ENCODE measurements at regions of chr12 and their contacts with region 1.

Region 1: DNA sequence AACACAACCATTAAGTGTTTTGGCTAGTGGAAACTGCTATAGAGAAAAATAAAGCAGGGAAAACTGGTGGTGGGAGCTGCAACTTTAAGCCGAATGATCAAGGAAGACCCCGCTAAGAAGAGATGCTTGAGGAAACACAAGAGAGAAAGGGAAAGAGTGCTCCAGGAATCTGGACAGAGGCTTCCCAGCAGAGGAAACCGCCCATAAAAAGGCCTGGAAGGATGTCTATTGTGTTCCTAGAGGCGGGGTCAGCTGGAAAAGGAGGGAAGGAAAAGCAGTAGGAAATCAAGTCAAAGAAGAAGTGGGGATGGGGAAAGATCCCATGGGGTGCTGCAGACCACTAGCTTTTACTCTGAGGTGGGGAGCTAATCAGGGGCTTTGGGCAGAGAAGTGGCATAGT is 12.4 kb downstream of the SLC2A13 start:
- DNase-seq: no peak
- ATAC-seq: no peak
- H3K4me3 ChIP-seq: no peak overlapping the region
- H3K4me3 Mint-ChIP-seq: no peak overlapping the region
- H3K27ac ChIP-seq: no peak overlapping the region
- H3K27ac Mint-ChIP-seq: no peak overlapping the region
- H3K4me1 ChIP-seq: no peaks in the 10 kb centered on the region
- H3K4me1 Mint-ChIP-seq: no peaks in the 10 kb centered on the region
- H3K27me3 ChIP-seq: no peaks in the 10 kb centered on the region
- H3K27me3 Mint-ChIP-seq: no peaks in the 10 kb centered on the region
- CTCF ChIP-seq: no peak

Region 2: DNA sequence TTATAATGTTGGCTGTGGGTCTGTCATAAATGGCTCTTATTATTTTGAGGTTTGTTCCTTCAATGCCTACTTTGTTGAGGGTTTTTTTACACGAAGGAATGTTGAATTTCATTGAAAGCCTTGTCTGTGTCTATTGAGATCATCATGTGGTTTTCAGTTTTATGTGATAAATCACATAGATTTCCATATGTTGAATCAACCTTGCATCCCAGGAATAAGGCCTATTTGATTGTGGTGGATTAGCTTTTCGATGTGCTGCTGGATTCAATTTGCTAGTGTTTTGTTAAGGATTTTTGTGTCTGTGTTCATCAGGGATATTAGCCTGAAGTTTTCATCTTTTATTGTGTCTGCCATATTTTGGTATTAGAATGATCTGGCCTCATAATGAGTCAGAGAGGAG is 15.2 kb before region 1 on chr12:
- CTCF ChIA-PET with region 1: no interaction called
- POLR2A ChIA-PET with region 1: no interaction called
- intact Hi-C with region 1: no loop called
- DNase-seq: no peak
- ATAC-seq: no peak
- H3K4me3 ChIP-seq: no peak overlapping the region
- H3K4me3 Mint-ChIP-seq: no peak overlapping the region
- H3K27ac ChIP-seq: no peak overlapping the region
- H3K27ac Mint-ChIP-seq: no peak overlapping the region
- H3K4me1 ChIP-seq: no peaks in the 10 kb centered on the region
- H3K4me1 Mint-ChIP-seq: no peaks in the 10 kb centered on the region
- H3K27me3 ChIP-seq: no peaks in the 10 kb centered on the region
- H3K27me3 Mint-ChIP-seq: peaks cover 3% of the 10 kb centered on the region
- CTCF ChIP-seq: no peak

Region 3: DNA sequence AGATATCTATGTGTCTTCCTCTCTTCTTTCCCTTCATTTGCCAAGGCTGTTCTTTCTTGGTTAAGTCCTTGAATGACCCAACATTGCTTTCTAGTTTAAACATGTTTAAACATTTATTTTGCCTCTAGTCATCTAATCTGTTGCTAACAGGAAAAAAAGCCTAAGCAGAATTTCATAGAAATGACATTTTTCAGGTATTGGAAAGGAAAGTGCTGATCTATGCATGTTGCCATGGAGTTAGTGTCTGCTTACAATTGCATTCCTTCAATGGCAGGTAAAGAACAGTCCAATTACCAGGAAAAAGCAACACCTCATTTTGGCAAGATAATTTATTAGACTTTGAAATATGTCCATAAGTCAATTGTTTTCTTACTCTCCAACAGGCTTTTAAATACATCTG is 33.9 kb after region 1 on chr12:
- CTCF ChIA-PET with region 1: interaction called, 3 read pairs
- POLR2A ChIA-PET with region 1: no interaction called
- intact Hi-C with region 1: loop called in 1 of 2 experiments (anchors 1 kb)
- DNase-seq: no peak
- ATAC-seq: no peak
- H3K4me3 ChIP-seq: no peak overlapping the region
- H3K4me3 Mint-ChIP-seq: no peak overlapping the region
- H3K27ac ChIP-seq: no peak overlapping the region
- H3K27ac Mint-ChIP-seq: no peak overlapping the region
- H3K4me1 ChIP-seq: no peaks in the 10 kb centered on the region
- H3K4me1 Mint-ChIP-seq: no peaks in the 10 kb centered on the region
- H3K27me3 ChIP-seq: no peaks in the 10 kb centered on the region
- H3K27me3 Mint-ChIP-seq: peaks cover 5% of the 10 kb centered on the region
- CTCF ChIP-seq: no peak

Region 4: DNA sequence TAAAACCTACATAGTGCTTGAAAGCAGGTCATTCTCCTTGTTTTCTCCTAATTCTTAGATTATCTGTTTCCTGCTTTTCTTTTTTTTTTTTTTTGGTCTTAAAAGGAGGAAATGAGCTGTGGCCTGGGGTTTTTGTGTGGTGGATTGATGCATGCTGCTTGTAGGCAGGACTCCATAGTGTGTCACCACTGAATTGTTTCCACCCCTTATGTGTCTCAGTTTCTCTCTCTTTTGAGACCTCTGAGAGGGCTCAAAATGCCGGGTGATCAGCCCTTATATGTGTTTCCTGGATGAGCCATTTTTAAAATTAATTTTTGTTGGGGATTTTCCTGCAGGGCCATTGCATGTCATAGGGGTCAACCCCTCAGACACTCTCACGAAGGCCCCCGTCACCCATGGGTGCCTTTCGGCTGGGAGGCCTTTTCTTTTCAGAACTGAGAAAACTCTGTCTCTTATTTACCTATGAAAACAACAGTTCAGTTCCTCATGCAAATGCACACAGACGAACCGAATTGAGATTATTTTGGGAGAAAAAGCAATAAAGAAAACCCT is 99.3 kb after region 1 on chr12:
- CTCF ChIA-PET with region 1: no interaction called
- POLR2A ChIA-PET with region 1: no interaction called
- intact Hi-C with region 1: no loop called
- DNase-seq: peak in 2 of 9 experiments; percentile 7 to 27
- ATAC-seq: peak; percentile 51
- H3K4me3 ChIP-seq: no peak overlapping the region
- H3K4me3 Mint-ChIP-seq: no peak overlapping the region
- H3K27ac ChIP-seq: no peak overlapping the region
- H3K27ac Mint-ChIP-seq: no peak overlapping the region
- H3K4me1 ChIP-seq: no peaks in the 10 kb centered on the region
- H3K4me1 Mint-ChIP-seq: peaks cover 3% of the 10 kb centered on the region
- H3K27me3 ChIP-seq: no peaks in the 10 kb centered on the region
- H3K27me3 Mint-ChIP-seq: no peaks in the 10 kb centered on the region
- CTCF ChIP-seq: no peak

Measured in CD8-positive, alpha-beta T cell (primary cell).